Ascending aorta (tissue), 2 donors: ENCODE measurements at regions of chr21 and their contacts with region 1.

Region 1: DNA sequence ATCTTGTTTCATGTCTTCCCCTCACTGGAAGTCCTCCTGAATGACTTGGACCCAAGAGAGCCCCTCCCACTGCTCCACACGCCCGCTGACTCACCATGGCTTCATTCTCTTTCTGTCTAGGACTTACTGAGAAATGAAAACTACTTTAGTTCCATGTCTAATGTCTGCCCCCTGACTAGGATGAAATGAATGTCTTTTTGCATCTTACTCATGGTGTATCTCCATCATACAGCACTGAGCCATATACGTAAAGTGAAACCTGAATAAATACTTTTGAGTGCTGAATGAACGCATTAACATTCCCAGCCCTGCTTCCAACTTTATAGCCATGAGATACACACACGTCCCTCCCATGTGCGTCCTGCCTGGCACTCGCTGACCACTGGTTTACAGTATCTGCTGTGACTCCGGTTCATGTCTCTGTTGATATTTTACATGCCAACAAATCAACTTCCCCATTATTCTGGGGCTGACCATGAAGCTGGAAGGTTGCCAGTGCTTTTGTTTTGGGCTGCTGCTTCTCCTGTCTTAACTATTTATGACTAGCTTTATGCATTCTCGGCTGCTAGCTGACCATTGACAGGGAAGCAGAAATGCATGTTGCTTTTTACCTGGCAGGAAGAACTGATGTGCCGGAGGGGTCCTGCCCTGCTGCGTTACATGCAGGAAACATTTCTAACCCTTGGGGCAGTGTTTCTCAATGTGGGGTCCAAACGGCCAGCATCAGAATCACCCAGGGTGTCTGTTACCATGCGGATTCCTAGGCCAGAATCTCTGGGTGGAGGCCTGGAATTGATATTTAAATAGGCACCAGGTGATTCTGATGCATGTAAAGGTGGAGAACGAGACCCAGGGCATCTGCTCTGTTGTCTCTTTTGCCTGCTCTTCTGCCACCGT is 182.4 kb downstream of the PCP4 start:
- DNase-seq: peak; percentile 39 to 87
- H3K4me3 ChIP-seq: no peak overlapping the region
- H3K27ac ChIP-seq: peak overlapping the region; percentile 77 to 85
- H3K4me1 ChIP-seq: peaks cover 10 to 46% of the 10 kb centered on the region in 2 donors
- H3K27me3 ChIP-seq: no peaks in the 10 kb centered on the region
- CTCF ChIP-seq: no peak

Region 2: DNA sequence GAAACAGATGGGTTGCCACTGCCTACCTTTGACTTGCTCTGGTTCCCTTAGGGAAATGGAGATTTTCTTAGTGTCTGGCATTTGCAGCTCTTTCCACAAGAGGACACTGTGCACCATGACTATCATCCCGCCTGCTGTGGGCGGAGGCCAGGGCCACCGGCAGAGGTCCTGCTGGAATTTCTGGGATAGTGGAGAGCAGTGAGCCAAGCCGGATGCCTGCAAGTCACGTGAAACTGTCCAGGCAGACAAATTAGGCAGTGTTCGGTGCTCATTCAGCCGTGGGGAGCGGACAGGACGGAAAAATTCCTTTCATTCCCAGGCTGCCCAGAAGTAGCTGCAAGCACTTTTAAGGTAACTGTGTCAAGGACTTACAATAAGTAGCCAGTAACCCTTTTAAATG is 261.3 kb before region 1 on chr21:
- intact Hi-C with region 1: loop called (anchors 10 kb)
- DNase-seq: peak in 1 of 2 donors; percentile 71
- H3K4me3 ChIP-seq: no peak overlapping the region
- H3K27ac ChIP-seq: no peak overlapping the region
- H3K4me1 ChIP-seq: no peaks in the 10 kb centered on the region
- H3K27me3 ChIP-seq: no peaks in the 10 kb centered on the region
- CTCF ChIP-seq: peak; percentile 36 to 59 (median 54)

Region 3: GRCh38 chr21:39867198-39867650 is 182.4 kb before region 1 on chr21 and contains the start of gene PCP4:
- intact Hi-C with region 1: loop called (anchors 10 kb)
- DNase-seq: peak in 1 of 2 donors; percentile 72
- H3K4me3 ChIP-seq: no peak within 1 kb of the TSS
- H3K27ac ChIP-seq: no peak within 1 kb of the TSS
- H3K4me1 ChIP-seq: no peaks in the 10 kb centered on the region
- H3K27me3 ChIP-seq: no peaks in the 10 kb centered on the region
- CTCF ChIP-seq: peak; percentile 63 to 91 (median 88)
- total RNA-seq, gene PCP4: not detected

Region 4: DNA sequence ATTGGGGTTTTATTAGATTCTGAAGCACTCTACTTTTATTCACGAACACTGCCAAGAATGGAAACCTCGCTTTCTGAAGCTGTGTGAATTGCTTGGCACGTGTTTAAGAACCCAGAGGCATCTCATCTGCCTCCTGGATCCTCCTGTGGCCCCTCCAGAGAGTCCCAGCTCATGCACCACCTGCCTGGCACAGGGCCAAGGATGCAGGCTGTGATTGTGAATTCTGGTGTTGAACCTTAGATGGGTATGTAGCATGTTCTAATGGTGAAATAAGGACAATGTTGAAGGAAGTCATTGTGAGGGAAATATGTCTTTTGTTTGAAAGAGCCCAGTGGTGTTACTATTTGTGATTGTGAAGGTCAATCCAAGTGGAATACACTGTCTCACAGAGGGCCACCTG is 156.2 kb before region 1 on chr21:
- intact Hi-C with region 1: loop called (anchors 10 kb)
- DNase-seq: no peak
- H3K4me3 ChIP-seq: no peak overlapping the region
- H3K27ac ChIP-seq: no peak overlapping the region
- H3K4me1 ChIP-seq: peaks cover 3 to 4% of the 10 kb centered on the region in 2 donors
- H3K27me3 ChIP-seq: no peaks in the 10 kb centered on the region
- CTCF ChIP-seq: no peak

Region 5: GRCh38 chr21:40099809-40100208 is 50.2 kb after region 1 on chr21:
- intact Hi-C with region 1: no loop called
- DNase-seq: no peak
- H3K4me3 ChIP-seq: no peak overlapping the region
- H3K27ac ChIP-seq: no peak overlapping the region
- H3K4me1 ChIP-seq: no peaks in the 10 kb centered on the region
- H3K27me3 ChIP-seq: no peaks in the 10 kb centered on the region
- CTCF ChIP-seq: no peak

Region 6: DNA sequence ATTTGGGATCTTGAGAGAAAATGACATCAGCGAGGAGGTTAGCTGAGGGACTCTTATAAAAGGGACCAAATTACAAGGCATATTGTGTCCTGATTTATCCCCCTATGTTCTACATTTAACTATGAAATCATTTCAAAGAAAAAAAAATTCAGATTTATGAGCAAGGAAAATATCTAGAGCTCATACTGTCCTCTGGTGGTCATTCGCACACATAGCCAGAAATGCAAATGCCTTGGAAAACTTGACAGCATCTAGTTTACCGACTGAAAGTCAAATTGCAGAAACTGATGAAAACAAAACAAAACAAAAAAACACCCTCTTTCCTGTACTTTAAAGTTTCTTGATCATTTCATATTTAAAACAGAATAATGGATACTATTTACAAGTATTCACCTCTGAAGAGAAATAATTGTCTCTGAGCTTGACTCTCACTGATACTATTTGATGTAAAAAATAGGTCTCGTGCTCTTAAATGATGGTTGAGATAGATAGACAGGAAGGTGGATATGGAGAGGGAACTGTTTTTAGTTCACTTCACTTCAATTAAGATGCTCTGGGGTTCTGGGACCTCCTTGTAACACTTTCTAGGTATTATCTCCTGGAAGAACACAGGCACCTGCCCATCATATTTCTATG is 71.4 kb after region 1 on chr21:
- intact Hi-C with region 1: loop called (anchors 2 kb)
- DNase-seq: no peak
- H3K4me3 ChIP-seq: no peak overlapping the region
- H3K27ac ChIP-seq: no peak overlapping the region
- H3K4me1 ChIP-seq: no peaks in the 10 kb centered on the region
- H3K27me3 ChIP-seq: no peaks in the 10 kb centered on the region
- CTCF ChIP-seq: peak; percentile 82 to 92 (median 90)